RWPE1 (cell line): ENCODE measurements at regions of chr1 and their contacts with region 1.

Region 1: DNA sequence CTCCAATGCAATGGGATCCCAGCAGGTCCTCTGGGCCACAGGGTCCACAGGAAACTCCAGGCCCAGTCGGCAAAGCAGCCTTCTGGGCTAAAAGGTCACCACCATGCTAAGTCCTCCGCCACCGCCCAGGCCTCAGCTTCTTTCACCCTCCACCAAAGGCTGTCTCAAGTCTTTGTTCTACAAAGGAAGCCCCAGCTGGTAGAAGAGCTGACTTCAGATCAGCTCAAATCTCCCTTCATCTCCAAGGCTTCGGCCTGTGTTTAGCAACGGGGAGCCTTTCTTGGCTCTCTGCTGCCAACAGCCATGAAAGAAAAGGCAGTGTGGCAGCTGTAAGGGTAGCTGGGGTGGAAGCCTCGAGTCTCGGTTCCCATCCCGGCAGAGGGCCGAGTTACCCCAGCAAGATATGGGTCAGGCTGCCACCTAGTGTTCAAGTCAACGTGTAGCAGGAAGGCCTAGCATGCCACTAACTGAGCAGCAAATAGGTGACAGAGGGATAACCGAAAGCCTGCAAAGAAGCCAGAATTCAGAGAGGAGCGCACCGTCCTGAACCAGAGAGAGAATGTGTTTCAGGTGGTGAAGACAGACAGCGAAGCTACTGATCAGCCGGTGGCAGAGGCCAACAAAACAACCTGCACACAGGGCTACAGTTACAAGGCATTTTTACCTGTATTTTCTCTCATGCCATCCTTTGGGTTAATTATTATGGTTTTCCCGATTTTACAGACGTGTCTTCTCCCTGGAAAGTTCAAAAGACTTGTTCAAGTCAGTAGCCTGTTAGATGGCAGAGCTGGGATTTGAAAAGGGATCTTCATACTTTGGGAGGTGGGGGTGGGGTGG is 26.8 kb upstream of the CRNN start:
- DNase-seq: peak; percentile 87
- H3K27ac ChIP-seq: peak overlapping the region; percentile 80
- CTCF ChIP-seq: peak; percentile 76

Region 2: DNA sequence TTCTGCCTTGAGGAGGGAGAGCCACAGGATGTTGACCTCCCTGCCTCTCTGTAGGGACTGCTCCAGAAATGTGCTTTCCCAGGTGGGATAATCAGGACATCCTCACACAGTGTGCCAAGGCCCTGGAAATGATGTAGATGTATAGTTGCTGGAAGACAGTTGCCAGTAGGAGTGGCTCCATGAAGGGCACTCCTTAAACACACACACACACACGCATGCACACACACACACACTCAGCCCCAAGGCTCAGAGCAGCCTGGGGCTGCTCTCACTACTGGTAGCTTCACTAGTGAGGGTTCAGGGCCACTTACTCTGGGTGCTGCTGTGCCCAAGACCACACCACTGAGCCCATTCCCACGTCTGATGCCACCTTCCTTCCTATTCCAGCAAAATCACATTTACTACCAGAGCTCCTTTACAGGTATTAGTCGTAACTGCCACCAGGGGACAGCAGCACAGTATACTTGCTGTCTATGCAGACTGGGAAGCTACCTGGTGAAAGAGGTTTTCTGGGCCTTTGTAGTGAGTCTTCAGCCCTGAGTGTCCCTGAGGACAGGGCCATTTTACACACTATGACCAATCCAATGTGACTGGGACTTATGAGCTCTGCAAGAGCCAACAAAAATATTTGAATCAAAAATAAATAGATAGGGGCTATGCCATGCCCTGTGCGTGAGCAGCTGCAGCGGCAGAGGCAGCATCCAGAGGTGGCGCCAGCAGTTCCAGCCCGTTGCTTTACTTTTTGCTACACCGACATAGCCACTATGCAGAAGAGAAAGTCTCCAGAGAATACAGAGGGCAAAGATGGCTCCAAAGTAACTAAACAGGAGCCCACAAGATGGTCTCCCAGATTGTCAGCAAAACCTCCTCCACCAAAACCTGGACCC is 41.8 kb before region 1 on chr1:
- CTCF ChIA-PET with region 1: interaction called, 30 read pairs
- POLR2A ChIA-PET with region 1: no interaction called
- DNase-seq: peak; percentile 60
- H3K27ac ChIP-seq: no peak overlapping the region
- CTCF ChIP-seq: peak; percentile 55

Region 3: DNA sequence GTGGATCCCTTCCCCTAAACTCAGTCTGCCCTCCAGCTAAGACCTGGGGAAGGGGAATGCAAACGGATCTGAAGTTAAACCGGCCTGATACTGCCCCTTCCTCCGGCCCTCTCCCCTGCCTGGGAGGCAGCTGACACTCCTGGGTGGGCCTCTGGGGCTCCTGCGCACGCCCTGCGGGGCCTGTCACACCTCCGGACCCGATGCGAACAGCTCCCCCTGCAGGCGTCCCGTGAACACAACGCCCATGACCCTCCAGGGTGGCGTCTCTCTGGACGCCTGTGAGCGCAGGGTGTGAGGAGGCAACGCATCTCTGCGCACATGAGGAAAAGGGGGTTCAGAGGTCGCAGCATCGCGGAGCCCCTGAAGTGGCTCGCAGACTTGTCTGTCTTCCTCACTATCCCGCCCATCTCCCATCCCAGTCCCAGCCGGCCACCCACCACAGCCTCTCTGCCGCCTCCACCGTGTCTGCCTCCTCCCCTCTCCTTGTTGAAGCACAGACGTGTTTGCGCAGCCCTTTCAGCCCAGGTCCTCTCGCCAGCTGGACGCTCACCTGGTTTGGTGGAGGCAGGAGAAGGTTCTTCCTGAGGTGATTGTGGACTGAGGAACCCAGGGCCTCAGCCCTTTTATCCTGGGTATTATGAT is 182.5 kb after region 1 on chr1:
- CTCF ChIA-PET with region 1: no interaction called
- POLR2A ChIA-PET with region 1: no interaction called
- DNase-seq: no peak
- H3K27ac ChIP-seq: peak overlapping the region; percentile 23
- CTCF ChIP-seq: no peak